GM23248 (cell line): ENCODE measurements at regions of chr10 and their contacts with region 1.

Region 1: GRCh38 chr10:116688241-116688711 is 54.1 kb downstream of the HSPA12A start:
- DNase-seq: peak; percentile 80
- H3K4me3 ChIP-seq: peak overlapping the region; percentile 54
- H3K27ac ChIP-seq: peak overlapping the region; percentile 41
- H3K4me1 ChIP-seq: peaks cover 17% of the 10 kb centered on the region
- H3K27me3 ChIP-seq: no peaks in the 10 kb centered on the region

Region 2: GRCh38 chr10:116783011-116783655 is 94.9 kb after region 1 on chr10:
- in situ Hi-C with region 1: loop called (anchors 5 kb)
- DNase-seq: peak; percentile 73
- H3K4me3 ChIP-seq: no peak overlapping the region
- H3K27ac ChIP-seq: no peak overlapping the region
- H3K4me1 ChIP-seq: peaks cover 6% of the 10 kb centered on the region; the same call in 1 of the 2 replicates
- H3K27me3 ChIP-seq: no peaks in the 10 kb centered on the region